Right ventricle myocardium inferior (tissue), 1 donor: ENCODE measurements at regions of chrX and their contacts with region 1.

Region 1: DNA sequence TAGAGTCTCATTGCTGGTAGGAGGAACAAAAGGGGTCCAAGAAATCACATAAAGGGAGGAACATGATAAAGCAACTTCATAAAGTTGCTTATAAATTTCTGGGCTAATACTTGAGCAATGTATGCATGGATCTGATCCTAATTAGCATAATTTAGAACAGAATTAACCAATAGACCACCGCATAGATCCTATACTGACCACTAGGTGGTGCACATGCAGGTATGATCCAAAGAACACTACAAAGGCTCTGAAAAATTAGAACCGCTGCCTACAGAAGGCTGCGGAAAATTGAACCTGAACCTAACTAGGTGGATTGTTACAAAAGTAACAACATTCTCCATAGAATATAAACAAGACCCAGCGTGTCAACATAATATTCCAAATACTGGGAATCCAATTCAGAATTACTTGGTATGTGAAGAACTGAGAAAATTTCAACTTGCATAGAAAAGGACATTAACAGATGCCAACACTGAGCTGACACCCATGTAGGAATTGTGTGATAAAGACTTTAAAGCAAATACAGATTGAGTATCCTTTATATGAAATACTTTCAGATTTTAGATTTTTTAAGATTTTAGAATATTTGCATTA is 23.3 kb downstream of the BRCC3 start:
- DNase-seq: no peak
- ATAC-seq: no peak

Region 2: DNA sequence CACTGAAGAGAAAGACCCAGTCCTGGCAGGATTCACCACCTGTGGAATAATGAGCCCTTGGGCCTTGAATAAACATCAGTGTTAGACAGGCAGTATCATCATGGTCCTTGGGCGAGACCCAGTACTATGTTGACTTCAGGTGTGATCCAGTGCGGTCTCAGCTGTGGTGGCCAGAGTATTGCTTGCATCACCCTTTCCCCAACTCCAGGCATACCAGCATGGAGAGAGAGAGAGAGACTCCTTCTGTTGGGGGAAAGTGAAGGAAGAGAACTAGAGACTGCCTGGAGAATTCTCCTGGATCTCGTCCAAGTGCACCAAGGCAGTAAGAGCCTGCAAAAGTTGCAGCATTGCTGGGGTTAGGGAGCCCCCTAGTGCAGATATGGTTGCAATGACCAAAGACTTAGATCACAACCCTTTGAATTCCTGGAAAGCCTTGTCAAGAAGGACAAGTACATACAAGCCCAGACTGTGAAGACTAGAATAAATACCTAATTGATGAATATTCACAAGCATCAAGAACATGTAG is 725.5 kb after region 1 on chrX:
- intact Hi-C with region 1: loop called (anchors 10 kb)
- DNase-seq: no peak
- ATAC-seq: peak; percentile 72